ENCODE measurements at regions of chr11 and their contacts with region 1.

Region 1: GRCh38 chr11:93089474-93090102 is 108.2 kb downstream of the SLC36A4 start:
- DNase-seq: peak; percentile 62
- ATAC-seq: peak; percentile 95
- H3K4me3 ChIP-seq: no peak overlapping the region
- H3K27ac ChIP-seq: no peak overlapping the region
- H3K4me1 ChIP-seq: no peaks in the 10 kb centered on the region
- H3K27me3 ChIP-seq: no peaks in the 10 kb centered on the region
- CTCF ChIP-seq: peak; percentile 51
- POLR2A ChIP-seq: no peak
- RAD21 ChIP-seq: peak; percentile 51

Region 2: DNA sequence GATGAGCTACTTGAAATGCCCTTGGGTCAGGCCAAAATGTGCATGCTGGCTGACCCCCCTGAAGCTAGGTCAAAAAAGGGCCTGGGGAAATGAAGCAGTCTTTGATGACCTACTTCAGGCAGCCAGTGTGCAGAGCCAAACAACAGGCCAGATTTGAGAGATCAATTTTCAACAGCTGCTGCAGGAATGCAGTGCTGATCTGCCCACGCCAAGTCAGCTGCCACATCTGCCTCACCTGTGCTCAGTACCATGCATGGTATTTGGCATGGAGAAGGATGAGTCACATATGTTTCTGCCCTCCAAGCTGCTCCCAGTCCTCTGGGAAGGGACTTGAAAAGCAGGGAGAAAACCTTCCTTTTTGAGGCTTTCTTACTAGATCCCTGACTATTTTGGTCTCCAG is 84.3 kb before region 1 on chr11:
- CTCF ChIA-PET with region 1: no interaction called
- POLR2A ChIA-PET with region 1: no interaction called
- dilution Hi-C with region 1: no loop called
- in situ Hi-C with region 1: no loop called
- intact Hi-C with region 1: no loop called
- DNase-seq: peak; percentile 63
- ATAC-seq: peak; percentile 10; the same call in 1 of the 2 replicates
- H3K4me3 ChIP-seq: no peak overlapping the region
- H3K27ac ChIP-seq: no peak overlapping the region
- H3K4me1 ChIP-seq: peaks cover 10% of the 10 kb centered on the region
- H3K27me3 ChIP-seq: no peaks in the 10 kb centered on the region
- CTCF ChIP-seq: no peak
- POLR2A ChIP-seq: no peak
- RAD21 ChIP-seq: no peak

Region 3: DNA sequence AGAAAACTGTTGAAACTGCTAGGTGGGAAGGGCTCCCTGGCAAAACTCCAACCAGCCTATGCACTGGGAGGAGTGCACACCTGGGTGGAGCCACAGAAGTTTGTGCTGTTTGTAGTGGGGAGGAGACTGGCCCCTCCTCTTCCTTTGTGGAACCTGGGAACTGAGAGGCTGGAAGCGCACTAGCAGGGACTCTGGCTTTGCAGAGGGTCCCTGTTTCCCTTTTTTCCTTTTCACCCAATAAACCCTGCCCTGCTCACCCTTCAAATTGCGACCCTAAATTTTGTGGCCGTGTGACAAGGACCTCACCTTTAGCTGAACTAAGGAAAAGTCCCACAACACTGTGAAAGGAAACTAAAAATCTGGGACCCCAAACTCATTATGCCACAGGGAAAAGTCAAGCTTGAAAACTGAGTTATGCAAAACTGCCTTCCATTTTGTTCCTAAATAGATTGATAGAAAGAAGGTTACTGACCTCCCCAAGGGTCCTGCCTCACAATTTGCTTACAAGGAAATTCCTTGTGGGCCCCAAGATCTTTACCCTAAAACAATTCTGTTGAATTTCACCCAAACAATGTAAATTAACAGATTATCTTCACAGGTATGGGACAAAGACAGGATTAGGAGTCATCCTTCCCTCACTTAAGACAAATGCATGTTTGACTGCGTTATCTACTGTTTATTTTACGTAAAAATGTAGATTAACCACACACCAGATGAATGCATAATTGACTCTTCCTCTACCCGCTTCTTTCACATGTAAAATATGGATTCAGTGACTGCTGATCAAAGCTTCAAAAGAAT is 27.3 kb after region 1 on chr11:
- CTCF ChIA-PET with region 1: interaction called, 4 read pairs
- POLR2A ChIA-PET with region 1: interaction called, 11 read pairs
- dilution Hi-C with region 1: no loop called
- in situ Hi-C with region 1: no loop called
- intact Hi-C with region 1: no loop called
- DNase-seq: peak; percentile 44
- ATAC-seq: peak; percentile 44; the same call in 1 of the 2 replicates
- H3K4me3 ChIP-seq: no peak overlapping the region
- H3K27ac ChIP-seq: no peak overlapping the region
- H3K4me1 ChIP-seq: peaks cover 3% of the 10 kb centered on the region
- H3K27me3 ChIP-seq: no peaks in the 10 kb centered on the region
- CTCF ChIP-seq: no peak
- POLR2A ChIP-seq: no peak
- RAD21 ChIP-seq: no peak

Region 4: DNA sequence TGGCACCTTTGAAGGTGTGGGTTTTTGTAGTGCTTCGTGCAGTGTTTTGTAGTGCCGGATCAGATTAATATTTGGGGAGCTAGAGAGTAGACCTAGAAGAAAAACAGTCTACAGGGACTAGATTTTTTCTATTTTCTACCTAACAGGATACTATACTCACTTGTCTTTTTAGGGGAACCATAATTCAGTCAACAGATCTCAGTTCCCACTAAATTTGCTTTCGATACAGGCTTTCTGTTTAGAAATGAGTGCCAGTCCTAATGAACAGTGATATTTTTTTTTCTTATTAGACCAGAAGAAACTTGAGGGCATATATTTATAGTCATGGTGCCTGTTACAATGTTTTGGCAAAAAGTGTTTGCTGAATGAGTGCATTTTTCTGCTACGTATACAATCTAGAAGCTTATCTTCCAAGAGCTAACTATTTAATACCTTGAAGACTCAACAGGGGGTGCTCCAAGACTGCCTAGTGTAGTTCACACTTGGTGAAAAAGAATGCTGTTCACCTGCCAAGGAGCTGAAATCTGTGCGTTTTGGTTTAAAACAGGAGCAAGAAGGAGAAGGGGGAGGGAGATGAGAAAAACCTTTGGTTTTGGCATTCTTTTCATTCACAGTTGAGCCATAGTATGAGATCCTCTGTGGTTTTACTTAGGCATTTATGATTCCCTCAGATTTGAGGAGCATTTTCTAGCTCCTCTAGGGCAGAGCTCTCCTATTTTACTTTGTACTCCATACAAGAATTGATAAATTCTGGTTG is 805.7 kb after region 1 on chr11:
- CTCF ChIA-PET with region 1: no interaction called
- POLR2A ChIA-PET with region 1: no interaction called
- dilution Hi-C with region 1: no loop called
- in situ Hi-C with region 1: no loop called
- intact Hi-C with region 1: no loop called
- DNase-seq: peak; percentile 82
- ATAC-seq: peak; percentile 98
- H3K4me3 ChIP-seq: no peak overlapping the region
- H3K27ac ChIP-seq: no peak overlapping the region
- H3K4me1 ChIP-seq: no peaks in the 10 kb centered on the region
- H3K27me3 ChIP-seq: peaks cover 10% of the 10 kb centered on the region
- CTCF ChIP-seq: peak; percentile 88
- POLR2A ChIP-seq: no peak
- RAD21 ChIP-seq: peak; percentile 95

Measured in IMR-90 (cell line).